Dendritic cell treated with granulocyte-macrophage colony-stimulating factor and Interleukin-4, amounts not matched to agents 40 ng/mL and 50 ng/mL, for 4 days (primary cell): ENCODE measurements at regions of chr17 and their contacts with region 1.

Region 1: GRCh38 chr17:17001874-17002520 is 30.1 kb upstream of the TNFRSF13B start:
- H3K4me3 Mint-ChIP-seq: no peak overlapping the region
- H3K27ac Mint-ChIP-seq: no peak overlapping the region
- H3K4me1 Mint-ChIP-seq: peaks cover 6% of the 10 kb centered on the region
- H3K27me3 Mint-ChIP-seq: peaks cover 30% of the 10 kb centered on the region

Region 2: GRCh38 chr17:17313350-17313991 is 311.5 kb after region 1 on chr17:
- intact Hi-C with region 1: loop called (anchors 5 kb)
- H3K4me3 Mint-ChIP-seq: no peak overlapping the region
- H3K27ac Mint-ChIP-seq: no peak overlapping the region
- H3K4me1 Mint-ChIP-seq: peaks cover 3% of the 10 kb centered on the region
- H3K27me3 Mint-ChIP-seq: no peaks in the 10 kb centered on the region